ENCODE measurements at regions of chr10 and their contacts with region 1.

Region 1: DNA sequence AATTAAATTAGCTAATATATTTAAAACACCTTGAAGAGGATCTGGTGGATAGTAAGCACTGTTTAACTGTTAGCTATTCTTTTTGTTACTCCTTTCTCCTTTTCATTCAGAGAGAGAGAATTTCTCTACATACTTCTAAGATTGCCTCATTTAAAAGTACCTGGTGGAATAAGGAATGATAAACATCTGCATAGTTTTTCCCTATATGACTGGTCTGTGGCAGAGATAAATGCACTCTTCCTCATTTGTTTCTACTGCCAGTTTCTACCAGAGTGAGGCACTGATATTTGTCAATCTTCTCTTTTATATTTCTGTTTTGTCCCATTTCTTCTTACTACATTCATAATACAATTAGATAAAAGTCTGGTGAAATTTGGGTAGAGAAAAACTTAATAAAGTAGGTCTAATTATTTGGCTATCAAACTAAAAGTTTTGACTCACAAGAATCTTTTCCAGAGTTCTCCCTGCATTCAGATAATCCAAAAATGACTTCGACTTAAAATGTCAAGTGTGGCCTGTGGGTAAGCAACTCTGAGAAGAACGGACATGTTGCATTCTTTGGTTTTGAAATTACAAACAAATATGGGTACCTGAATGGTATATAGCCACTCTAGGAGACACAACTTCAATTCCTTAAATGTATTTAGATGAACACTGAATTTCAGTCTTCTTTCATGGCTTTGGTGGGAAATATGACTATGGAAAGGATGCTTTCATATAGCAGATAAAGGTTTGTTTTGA is 38.8 kb downstream of the RNLS start:
- DNase-seq: no peak
- H3K4me3 Mint-ChIP-seq: no peak overlapping the region
- H3K27ac Mint-ChIP-seq: no peak overlapping the region
- H3K4me1 Mint-ChIP-seq: peaks cover 24% of the 10 kb centered on the region
- H3K27me3 Mint-ChIP-seq: peaks cover 15% of the 10 kb centered on the region

Region 2: GRCh38 chr10:88528201-88528600 is 16.1 kb before region 1 on chr10:
- intact Hi-C with region 1: loop called (anchors 1 kb)
- DNase-seq: no peak
- H3K4me3 Mint-ChIP-seq: no peak overlapping the region
- H3K27ac Mint-ChIP-seq: no peak overlapping the region
- H3K4me1 Mint-ChIP-seq: peaks cover 6% of the 10 kb centered on the region
- H3K27me3 Mint-ChIP-seq: peaks cover 13% of the 10 kb centered on the region